Right ventricle myocardium inferior (tissue), 1 donor: ENCODE measurements at regions of chr19 and their contacts with region 1.

Region 1: GRCh38 chr19:53333463-53334449 is at the start of gene ZNF845:
- DNase-seq: peak; percentile 96
- ATAC-seq: peak; percentile 100
- total RNA-seq, gene ZNF845: 3.7 TPM

Region 2: GRCh38 chr19:53254411-53255341 is 79.1 kb before region 1 on chr19 and contains the start of gene ZNF677:
- intact Hi-C with region 1: loop called (anchors 2 kb)
- DNase-seq: peak; percentile 95
- ATAC-seq: peak; percentile 100
- total RNA-seq, gene ZNF677: 20.1 TPM

Region 3: GRCh38 chr19:53308339-53308811 is 25.4 kb before region 1 on chr19:
- intact Hi-C with region 1: no loop called
- DNase-seq: no peak
- ATAC-seq: no peak